T-cell (primary cell): ENCODE measurements at regions of chr5 and their contacts with region 1.

Region 1: GRCh38 chr5:54379590-54379989 is 69.2 kb upstream of the ARL15 start:
- DNase-seq: no peak
- ATAC-seq: no peak
- H3K4me3 ChIP-seq: no peak overlapping the region
- H3K4me3 Mint-ChIP-seq: no peak overlapping the region
- H3K27ac ChIP-seq: no peak overlapping the region
- H3K27ac Mint-ChIP-seq: no peak overlapping the region
- H3K4me1 ChIP-seq: no peaks in the 10 kb centered on the region
- H3K4me1 Mint-ChIP-seq: no peaks in the 10 kb centered on the region
- H3K27me3 ChIP-seq: peaks cover 0 to 6% of the 10 kb centered on the region in 2 experiments
- H3K27me3 Mint-ChIP-seq: peaks cover 31 to 38% of the 10 kb centered on the region in 2 donors

Region 2: DNA sequence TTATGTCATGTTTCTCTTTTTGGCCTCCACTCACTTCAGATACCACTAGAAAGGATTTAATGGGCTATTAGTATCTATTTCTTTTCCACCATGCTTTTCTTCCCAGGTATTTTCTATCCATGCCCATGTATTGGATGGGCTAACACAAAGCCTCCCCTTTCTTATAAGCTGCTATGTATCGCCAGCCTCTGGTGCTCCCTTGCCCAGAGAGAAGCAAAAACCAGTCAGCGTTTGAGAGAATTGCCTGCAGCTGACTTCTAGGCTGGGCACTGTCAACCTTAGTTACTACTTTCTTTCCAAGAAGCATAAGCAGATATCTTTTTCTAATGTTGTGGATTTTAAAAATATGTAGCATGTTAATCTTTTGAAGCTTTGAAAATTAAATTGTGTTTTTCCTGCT is 45.7 kb after region 1 on chr5:
- CTCF ChIA-PET with region 1: no interaction called
- POLR2A ChIA-PET with region 1: interaction called in 1 of 2 experiments, 10 read pairs
- DNase-seq: no peak
- ATAC-seq: no peak
- H3K4me3 ChIP-seq: no peak overlapping the region
- H3K4me3 Mint-ChIP-seq: no peak overlapping the region
- H3K27ac ChIP-seq: no peak overlapping the region
- H3K27ac Mint-ChIP-seq: no peak overlapping the region
- H3K4me1 ChIP-seq: no peaks in the 10 kb centered on the region
- H3K4me1 Mint-ChIP-seq: no peaks in the 10 kb centered on the region
- H3K27me3 ChIP-seq: peaks cover 0 to 10% of the 10 kb centered on the region in 2 experiments
- H3K27me3 Mint-ChIP-seq: peaks cover 16 to 23% of the 10 kb centered on the region in 2 donors

Region 3: GRCh38 chr5:55172051-55172899 is 792.7 kb after region 1 on chr5:
- CTCF ChIA-PET with region 1: no interaction called
- POLR2A ChIA-PET with region 1: no interaction called
- DNase-seq: peak; percentile 13 to 91 (median 52)
- ATAC-seq: peak; percentile 58 to 76 (median 72)
- H3K4me3 ChIP-seq: peak overlapping the region; percentile 53 to 88
- H3K4me3 Mint-ChIP-seq: peak overlapping the region; percentile 68 to 80 (median 75)
- H3K27ac ChIP-seq: no peak overlapping the region
- H3K27ac Mint-ChIP-seq: no peak overlapping the region
- H3K4me1 ChIP-seq: peaks cover 18 to 30% of the 10 kb centered on the region in 2 experiments
- H3K4me1 Mint-ChIP-seq: peaks cover 35 to 38% (median 36%) of the 10 kb centered on the region in 3 donors
- H3K27me3 ChIP-seq: peaks cover 20 to 42% of the 10 kb centered on the region in 2 experiments
- H3K27me3 Mint-ChIP-seq: peaks cover 52 to 70% of the 10 kb centered on the region in 2 donors